Ovary (tissue), 10 donors: ENCODE measurements at regions of chr3 and their contacts with region 1.

Region 1: GRCh38 chr3:57826245-57826951 is 70.3 kb downstream of the SLMAP start:
- DNase-seq: no peak
- H3K4me3 ChIP-seq: no peak overlapping the region
- H3K27ac ChIP-seq: peak overlapping the region in 1 of 2 donors; percentile 71
- H3K4me1 ChIP-seq: peaks cover 6% of the 10 kb centered on the region
- H3K27me3 ChIP-seq: no peaks in the 10 kb centered on the region
- CTCF ChIP-seq: peak in 2 of 3 donors; percentile 7 to 36
- EP300 ChIP-seq: no peak
- POLR2A ChIP-seq: no peak

Region 2: GRCh38 chr3:57646723-57647122 is 179.7 kb before region 1 on chr3:
- intact Hi-C with region 1: loop called in 2 of 4 experiments (anchors 10 kb)
- DNase-seq: peak in 3 of 5 donors; percentile 27 to 40 (median 28)
- H3K4me3 ChIP-seq: no peak overlapping the region
- H3K27ac ChIP-seq: no peak overlapping the region
- H3K4me1 ChIP-seq: peaks cover 4% of the 10 kb centered on the region
- H3K27me3 ChIP-seq: no peaks in the 10 kb centered on the region
- CTCF ChIP-seq: peak in 1 of 3 donors; percentile 25
- EP300 ChIP-seq: no peak
- POLR2A ChIP-seq: no peak

Region 3: DNA sequence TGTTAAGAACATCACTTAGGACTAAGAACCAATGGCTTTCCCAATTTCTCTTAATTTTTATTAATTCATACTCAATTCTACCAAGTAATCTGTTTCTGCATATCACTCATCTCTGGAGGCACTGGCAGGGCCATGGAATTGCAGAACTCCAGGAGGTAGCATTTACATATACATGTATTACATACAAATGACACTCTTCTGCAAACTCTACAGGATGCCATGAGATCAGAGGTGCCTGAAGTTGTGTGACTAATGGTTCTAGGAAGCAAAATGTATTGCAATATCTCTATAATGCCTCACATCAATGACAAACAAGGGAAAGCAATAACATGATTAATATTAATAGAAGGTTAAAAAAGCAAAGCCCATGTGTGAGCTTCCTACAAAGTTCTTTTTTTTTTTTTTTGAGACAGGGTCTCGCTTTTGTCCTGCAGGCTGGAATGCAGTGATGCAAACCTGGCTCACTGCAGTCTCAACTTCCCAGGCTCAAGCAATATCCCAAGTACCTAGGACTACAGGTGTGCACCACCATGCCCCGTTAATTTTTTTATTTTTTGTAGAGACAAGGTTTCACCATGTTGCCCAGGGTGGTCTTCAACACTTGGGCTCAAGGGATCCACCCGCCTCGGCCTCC is 166.5 kb before region 1 on chr3:
- intact Hi-C with region 1: loop called in 1 of 4 experiments (anchors 10 kb)
- DNase-seq: no peak
- H3K4me3 ChIP-seq: no peak overlapping the region
- H3K27ac ChIP-seq: no peak overlapping the region
- H3K4me1 ChIP-seq: peaks cover 2% of the 10 kb centered on the region
- H3K27me3 ChIP-seq: no peaks in the 10 kb centered on the region
- CTCF ChIP-seq: no peak
- EP300 ChIP-seq: no peak
- POLR2A ChIP-seq: no peak

Region 4: DNA sequence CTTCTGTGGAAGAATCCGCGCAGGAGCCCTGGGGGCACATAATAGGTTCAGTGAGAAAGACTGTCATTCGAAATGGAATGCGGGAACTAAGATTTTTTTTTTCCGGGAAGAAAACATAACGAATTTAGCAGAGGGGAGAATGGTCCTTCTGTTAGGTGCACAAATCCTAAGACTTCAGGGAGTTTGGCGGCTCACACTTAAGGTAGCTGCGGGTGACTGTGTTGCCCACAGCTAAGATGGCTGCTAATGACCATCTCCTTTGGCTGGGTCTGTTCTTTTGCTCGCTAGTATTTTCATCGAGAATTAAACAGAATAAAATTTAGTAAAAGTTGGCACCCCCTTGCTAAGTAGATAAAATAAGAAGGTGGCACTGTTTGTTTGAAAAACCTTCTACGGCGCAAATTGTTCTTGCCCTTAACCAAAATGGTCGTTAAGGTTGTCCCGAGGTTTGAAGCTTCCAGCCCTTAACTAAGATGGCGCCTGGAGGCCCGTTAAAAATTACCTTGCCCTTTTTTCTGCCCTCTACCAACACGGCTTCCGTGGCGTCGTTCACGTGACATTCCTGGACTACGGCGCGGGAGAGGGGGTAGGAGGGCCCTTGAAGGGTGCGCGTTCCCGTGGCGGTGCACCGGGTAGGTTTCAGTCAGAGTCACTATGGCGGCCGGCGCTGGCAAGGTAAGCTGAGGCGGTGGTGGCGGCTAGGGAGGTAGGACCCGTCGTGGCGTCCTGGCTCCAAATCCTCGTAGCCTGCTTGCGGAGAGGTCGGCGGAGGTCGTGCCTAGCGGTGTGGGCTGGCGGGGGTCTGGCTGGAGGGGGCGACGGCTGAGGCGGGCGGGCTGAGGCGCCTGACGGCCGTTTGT is 70.5 kb before region 1 on chr3 and contains the start of gene SLMAP:
- intact Hi-C with region 1: loop called in 1 of 4 experiments (anchors 5 kb)
- DNase-seq: peak; percentile 94 to 97 (median 96)
- H3K4me3 ChIP-seq: peak within 1 kb of the TSS; percentile 98
- H3K27ac ChIP-seq: peak within 1 kb of the TSS; percentile 76 to 94
- H3K4me1 ChIP-seq: peaks cover 9% of the 10 kb centered on the region
- H3K27me3 ChIP-seq: no peaks in the 10 kb centered on the region
- CTCF ChIP-seq: no peak
- EP300 ChIP-seq: no peak
- POLR2A ChIP-seq: peak; percentile 53
- total RNA-seq, gene SLMAP: 45.8 to 113 (median 75.2) TPM